Activated naive CD4-positive, alpha-beta T cell treated with anti-CD3 and anti-CD28 coated beads for 36 hours (primary cell): ENCODE measurements at regions of chr12 and their contacts with region 1.

Region 1: GRCh38 chr12:90978117-90978770 is 23.3 kb upstream of the CCER1 start:
- DNase-seq: no peak
- H3K4me3 Mint-ChIP-seq: no peak overlapping the region
- H3K27ac Mint-ChIP-seq: no peak overlapping the region
- H3K4me1 Mint-ChIP-seq: no peaks in the 10 kb centered on the region
- H3K27me3 Mint-ChIP-seq: peaks cover 6% of the 10 kb centered on the region

Region 2: GRCh38 chr12:91109148-91109564 is 130.9 kb after region 1 on chr12:
- CTCF ChIA-PET with region 1: interaction called, 10 read pairs
- intact Hi-C with region 1: loop called (anchors 1 kb)
- DNase-seq: peak; percentile 74
- H3K4me3 Mint-ChIP-seq: no peak overlapping the region
- H3K27ac Mint-ChIP-seq: no peak overlapping the region
- H3K4me1 Mint-ChIP-seq: no peaks in the 10 kb centered on the region
- H3K27me3 Mint-ChIP-seq: peaks cover 11% of the 10 kb centered on the region

Region 3: DNA sequence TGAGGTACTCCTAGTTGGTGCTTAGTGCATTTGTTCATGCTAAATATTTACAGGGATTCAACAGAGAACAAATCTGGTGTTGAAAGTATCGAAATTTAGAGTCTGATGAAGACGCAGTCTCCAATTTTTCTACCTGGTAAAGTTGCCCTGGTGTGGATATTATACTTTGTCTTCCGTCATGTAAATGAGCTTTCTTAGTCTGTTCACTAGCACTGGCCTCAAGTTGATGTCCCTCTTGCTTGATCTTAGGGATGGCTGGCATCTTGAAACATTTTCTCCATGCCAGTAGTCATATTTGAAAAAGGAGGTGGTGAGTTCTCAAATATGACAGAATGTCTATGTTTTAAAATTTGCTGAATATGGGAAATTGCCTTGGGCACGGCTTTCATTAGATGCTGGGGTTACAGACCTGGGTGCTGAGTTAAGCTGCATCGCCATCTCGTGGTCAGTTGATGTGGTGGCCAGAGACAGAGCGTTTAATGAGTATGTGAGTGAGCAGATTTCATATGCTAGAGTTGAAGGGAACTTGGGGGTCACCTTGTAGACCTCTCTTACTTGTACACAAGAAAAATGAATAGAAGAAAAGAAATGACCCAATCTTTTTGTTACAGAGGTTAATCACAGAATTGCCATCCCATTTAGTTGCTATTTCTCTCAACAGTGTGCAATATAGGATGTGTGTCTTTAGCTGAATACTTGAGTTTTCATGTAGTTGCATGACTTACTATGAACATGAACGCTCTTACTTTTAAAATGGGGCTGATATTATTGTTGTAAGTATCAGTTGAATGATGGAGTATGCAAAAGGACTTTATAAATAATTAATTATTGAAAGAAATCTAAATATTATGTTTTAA is 377.1 kb after region 1 on chr12:
- CTCF ChIA-PET with region 1: interaction called, 10 read pairs
- intact Hi-C with region 1: loop called (anchors 1 kb)
- DNase-seq: peak; percentile 71
- H3K4me3 Mint-ChIP-seq: no peak overlapping the region
- H3K27ac Mint-ChIP-seq: no peak overlapping the region
- H3K4me1 Mint-ChIP-seq: no peaks in the 10 kb centered on the region
- H3K27me3 Mint-ChIP-seq: peaks cover 7% of the 10 kb centered on the region